ENCODE measurements at regions of chr2 and their contacts with region 1.

Region 1: GRCh38 chr2:121689356-121689755 is 40.1 kb upstream of the CLASP1 start:
- DNase-seq: peak in 1 of 35 experiments; percentile 8
- ATAC-seq: no peak
- H3K4me3 ChIP-seq: no peak overlapping the region
- H3K4me3 Mint-ChIP-seq: no peak overlapping the region
- H3K27ac ChIP-seq: no peak overlapping the region
- H3K27ac Mint-ChIP-seq: no peak overlapping the region
- H3K4me1 ChIP-seq: no peaks in the 10 kb centered on the region
- H3K4me1 Mint-ChIP-seq: peaks cover 0 to 2% (median 0%) of the 10 kb centered on the region in 3 donors
- H3K27me3 ChIP-seq: peaks cover 0 to 2% of the 10 kb centered on the region in 2 experiments
- H3K27me3 Mint-ChIP-seq: no peaks in the 10 kb centered on the region

Region 2: DNA sequence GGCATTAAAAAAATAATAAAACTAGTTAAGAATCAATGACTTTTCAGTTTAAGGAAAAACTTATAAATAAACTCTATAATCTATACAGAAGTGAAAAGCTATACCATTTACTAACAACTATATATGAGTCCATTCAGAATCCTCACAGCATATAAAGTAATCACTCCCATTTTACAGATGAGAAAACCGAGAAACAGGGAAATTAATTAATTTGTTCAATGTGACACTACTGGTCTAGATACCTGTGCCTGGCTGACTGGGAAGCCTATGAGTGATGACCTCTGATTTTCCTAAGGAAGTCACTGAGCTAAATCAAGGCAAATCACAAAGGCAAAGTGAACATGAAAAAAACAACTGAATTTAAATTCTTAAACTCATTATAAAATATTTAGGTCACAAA is 258.1 kb before region 1 on chr2:
- CTCF ChIA-PET with region 1: no interaction called
- POLR2A ChIA-PET with region 1: interaction called in 1 of 2 experiments, 10 read pairs
- DNase-seq: no peak
- ATAC-seq: no peak
- H3K4me3 ChIP-seq: no peak overlapping the region
- H3K4me3 Mint-ChIP-seq: no peak overlapping the region
- H3K27ac ChIP-seq: no peak overlapping the region
- H3K27ac Mint-ChIP-seq: no peak overlapping the region
- H3K4me1 ChIP-seq: no peaks in the 10 kb centered on the region
- H3K4me1 Mint-ChIP-seq: no peaks in the 10 kb centered on the region
- H3K27me3 ChIP-seq: no peaks in the 10 kb centered on the region
- H3K27me3 Mint-ChIP-seq: no peaks in the 10 kb centered on the region

Region 3: GRCh38 chr2:121771976-121772742 is 82.8 kb after region 1 on chr2:
- CTCF ChIA-PET with region 1: no interaction called
- POLR2A ChIA-PET with region 1: no interaction called
- DNase-seq: no peak
- ATAC-seq: no peak
- H3K4me3 ChIP-seq: no peak overlapping the region
- H3K4me3 Mint-ChIP-seq: no peak overlapping the region
- H3K27ac ChIP-seq: no peak overlapping the region
- H3K27ac Mint-ChIP-seq: no peak overlapping the region
- H3K4me1 ChIP-seq: no peaks in the 10 kb centered on the region
- H3K4me1 Mint-ChIP-seq: no peaks in the 10 kb centered on the region
- H3K27me3 ChIP-seq: no peaks in the 10 kb centered on the region
- H3K27me3 Mint-ChIP-seq: no peaks in the 10 kb centered on the region